Mucosa of descending colon (tissue), 3 donors: ENCODE measurements at regions of chr9 and their contacts with region 1.

Region 1: GRCh38 chr9:95249986-95250385 is 67.5 kb downstream of the FANCC start:
- DNase-seq: no peak
- ATAC-seq: peak; percentile 68
- H3K4me3 ChIP-seq: no peak overlapping the region
- H3K4me1 ChIP-seq: no peaks in the 10 kb centered on the region
- CTCF ChIP-seq: no peak

Region 2: GRCh38 chr9:95528908-95529502 is 279.0 kb after region 1 on chr9:
- intact Hi-C with region 1: loop called in 1 of 2 experiments (anchors 5 kb)
- DNase-seq: no peak
- ATAC-seq: no peak
- H3K4me3 ChIP-seq: no peak overlapping the region
- H3K4me1 ChIP-seq: no peaks in the 10 kb centered on the region
- CTCF ChIP-seq: no peak